HepG2 (cell line): ENCODE measurements at regions of chr2 and their contacts with region 1.

Region 1: GRCh38 chr2:105344704-105345345 is 7.5 kb downstream of the C2orf49 start:
- DNase-seq: peak; percentile 58
- ATAC-seq: peak; percentile 80
- H3K4me3 ChIP-seq: no peak overlapping the region
- H3K27ac ChIP-seq: no peak overlapping the region
- H3K4me1 ChIP-seq: peaks cover 14% of the 10 kb centered on the region
- H3K27me3 ChIP-seq: no peaks in the 10 kb centered on the region
- CTCF ChIP-seq: peak; percentile 50
- EP300 ChIP-seq: no peak
- POLR2A ChIP-seq: no peak
- RAD21 ChIP-seq: no peak

Region 2: GRCh38 chr2:105373895-105374401 is 29.1 kb after region 1 on chr2:
- CTCF ChIA-PET with region 1: no interaction called
- POLR2A ChIA-PET with region 1: no interaction called
- in situ Hi-C with region 1: no loop called
- intact Hi-C with region 1: no loop called
- DNase-seq: no peak
- ATAC-seq: no peak
- H3K4me3 ChIP-seq: no peak overlapping the region
- H3K27ac ChIP-seq: no peak overlapping the region
- H3K4me1 ChIP-seq: peaks cover 16% of the 10 kb centered on the region
- H3K27me3 ChIP-seq: no peaks in the 10 kb centered on the region
- CTCF ChIP-seq: no peak
- EP300 ChIP-seq: no peak
- POLR2A ChIP-seq: no peak
- RAD21 ChIP-seq: no peak

Region 3: GRCh38 chr2:105398699-105399432 is 54.0 kb after region 1 on chr2 and contains the start of gene FHL2:
- CTCF ChIA-PET with region 1: no interaction called
- POLR2A ChIA-PET with region 1: no interaction called
- in situ Hi-C with region 1: no loop called
- intact Hi-C with region 1: no loop called
- DNase-seq: peak; percentile 64
- ATAC-seq: peak; percentile 98
- H3K4me3 ChIP-seq: peak within 1 kb of the TSS; percentile 65 to 85 (median 80)
- H3K27ac ChIP-seq: peak within 1 kb of the TSS; percentile 31
- H3K4me1 ChIP-seq: peaks cover 60% of the 10 kb centered on the region
- H3K27me3 ChIP-seq: peaks cover 0 to 8% of the 10 kb centered on the region in 2 experiments; a peak in 2 of 5 replicates
- CTCF ChIP-seq: peak; percentile 59
- EP300 ChIP-seq: 0 out of 4 replicates have a peak, but pooled peaks of 1 of the 2 experiments have one; percentile 6
- POLR2A ChIP-seq: peak; percentile 47 to 50; a peak in 3 of 4 replicates
- RAD21 ChIP-seq: peak; percentile 56
- total RNA-seq, gene FHL2: 1.9 and 2.3 TPM in 2 replicates

Region 4: DNA sequence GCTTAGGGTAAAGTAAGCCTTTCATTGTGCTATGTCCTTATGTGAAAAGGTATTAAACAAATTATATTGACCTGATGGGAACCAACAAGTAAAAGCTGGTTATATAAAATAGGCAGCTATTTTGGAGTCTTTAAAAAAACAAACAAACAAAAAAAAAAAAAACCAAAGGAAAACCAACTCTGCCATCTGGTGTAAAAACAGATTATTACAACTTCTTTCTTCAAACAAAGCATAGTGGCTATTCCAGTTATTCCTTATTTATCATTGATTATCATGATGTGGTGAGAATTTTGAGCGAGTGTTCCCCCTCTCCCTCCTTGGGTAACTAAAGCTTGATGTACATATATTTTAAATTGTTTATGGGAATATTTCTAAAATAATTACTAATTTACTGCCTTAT is 176.4 kb after region 1 on chr2:
- CTCF ChIA-PET with region 1: interaction called, 21 read pairs
- POLR2A ChIA-PET with region 1: no interaction called
- in situ Hi-C with region 1: no loop called
- intact Hi-C with region 1: loop called (anchors 1 kb)
- DNase-seq: peak; percentile 18
- ATAC-seq: no peak
- H3K4me3 ChIP-seq: no peak overlapping the region
- H3K27ac ChIP-seq: no peak overlapping the region
- H3K4me1 ChIP-seq: peaks cover 10% of the 10 kb centered on the region; the same call in 1 of the 2 replicates
- H3K27me3 ChIP-seq: peaks cover 0 to 12% of the 10 kb centered on the region in 2 experiments; a peak in 2 of 5 replicates
- CTCF ChIP-seq: peak; percentile 57
- EP300 ChIP-seq: no peak
- POLR2A ChIP-seq: no peak
- RAD21 ChIP-seq: peak; percentile 60; the same call in 1 of the 2 replicates

Region 5: DNA sequence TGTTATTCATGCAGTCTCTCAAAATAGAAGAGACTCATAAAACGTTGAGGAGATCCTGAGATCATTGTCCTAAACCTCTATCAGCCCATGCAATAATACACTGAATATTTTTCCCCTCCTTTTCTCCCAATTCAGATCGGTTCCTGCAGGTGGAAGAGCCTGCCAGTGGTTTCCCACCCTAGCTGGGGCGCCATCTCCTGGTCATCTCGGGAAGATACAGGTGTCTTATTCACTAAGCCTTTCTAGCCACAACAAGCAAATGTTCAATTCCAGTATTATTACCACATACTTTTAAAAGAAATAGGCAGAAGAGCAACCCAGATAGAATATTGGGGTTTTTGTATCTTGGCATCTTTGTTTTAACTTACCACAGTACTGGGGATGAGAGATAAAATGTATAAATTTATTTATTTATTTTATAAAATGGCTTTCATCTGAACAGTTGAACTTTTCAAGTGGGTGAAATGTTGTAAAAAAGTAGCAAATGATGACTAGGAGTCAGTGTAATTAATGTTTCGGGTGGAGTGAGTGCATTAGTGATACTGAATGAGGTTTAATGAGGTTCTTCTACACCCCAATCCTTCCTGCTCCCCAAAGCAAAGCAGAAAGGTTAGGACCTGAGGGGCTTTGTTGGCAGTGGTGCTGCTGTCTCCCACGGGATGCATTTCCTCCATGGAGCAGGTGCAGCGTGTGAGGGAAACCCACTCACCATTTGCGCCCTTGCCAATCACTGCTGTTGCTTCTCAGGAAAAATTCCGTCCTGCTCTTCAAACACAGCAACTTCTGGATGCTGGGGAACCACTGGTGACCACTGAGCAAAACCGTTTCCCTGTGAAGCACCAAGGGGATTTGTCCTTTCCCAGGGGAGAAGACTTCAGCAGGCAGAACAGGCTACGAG is 201.2 kb after region 1 on chr2:
- CTCF ChIA-PET with region 1: interaction called, 6 read pairs
- POLR2A ChIA-PET with region 1: no interaction called
- in situ Hi-C with region 1: no loop called
- intact Hi-C with region 1: loop called (anchors 1 kb)
- DNase-seq: peak; percentile 67
- ATAC-seq: peak; percentile 94
- H3K4me3 ChIP-seq: no peak overlapping the region
- H3K27ac ChIP-seq: no peak overlapping the region
- H3K4me1 ChIP-seq: no peaks in the 10 kb centered on the region
- H3K27me3 ChIP-seq: peaks cover 0 to 26% of the 10 kb centered on the region in 2 experiments; a peak in 3 of 5 replicates
- CTCF ChIP-seq: peak; percentile 79
- EP300 ChIP-seq: no peak
- POLR2A ChIP-seq: no peak
- RAD21 ChIP-seq: peak; percentile 42; the same call in 1 of the 2 replicates